ENCODE measurements at regions of chr15 and their contacts with region 1.

Region 1: DNA sequence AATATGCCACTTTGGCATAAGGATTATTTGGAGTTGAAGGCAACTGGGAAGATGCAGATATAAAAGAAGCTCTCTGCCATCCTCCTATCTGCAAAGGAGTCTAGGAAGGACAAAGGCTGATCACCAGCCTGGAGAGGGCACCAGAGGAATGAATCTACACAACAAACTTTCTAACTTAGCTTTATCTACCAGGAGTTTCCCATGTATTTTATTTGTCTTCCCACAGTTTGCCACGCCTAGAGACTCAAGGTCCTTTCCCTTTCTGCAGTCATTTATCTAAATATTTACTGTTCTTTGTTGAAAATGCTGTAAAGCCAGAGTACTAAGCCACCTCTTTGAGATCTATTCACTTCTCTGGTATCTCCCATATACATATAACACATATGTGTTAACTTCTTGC is 32.2 kb downstream of the GPR176 start:
- DNase-seq: peak; percentile 76
- ATAC-seq: peak; percentile 91
- H3K4me3 ChIP-seq: no peak overlapping the region
- H3K27ac ChIP-seq: peak overlapping the region; percentile 45
- H3K4me1 ChIP-seq: peaks cover 22% of the 10 kb centered on the region
- H3K27me3 ChIP-seq: no peaks in the 10 kb centered on the region
- CTCF ChIP-seq: peak; percentile 78

Region 2: GRCh38 chr15:39511916-39512260 is 375.9 kb before region 1 on chr15:
- CTCF ChIA-PET with region 1: no interaction called
- POLR2A ChIA-PET with region 1: no interaction called
- intact Hi-C with region 1: no loop called
- DNase-seq: no peak
- ATAC-seq: peak; percentile 28
- H3K4me3 ChIP-seq: 0 out of 2 replicates have a peak overlapping the region, but pooled peaks have one; percentile 4
- H3K27ac ChIP-seq: no peak overlapping the region
- H3K4me1 ChIP-seq: peaks cover 13% of the 10 kb centered on the region
- H3K27me3 ChIP-seq: no peaks in the 10 kb centered on the region
- CTCF ChIP-seq: no peak

Region 3: GRCh38 chr15:39666677-39667076 is 221.2 kb before region 1 on chr15:
- CTCF ChIA-PET with region 1: no interaction called
- POLR2A ChIA-PET with region 1: no interaction called
- intact Hi-C with region 1: no loop called
- DNase-seq: no peak
- ATAC-seq: no peak
- H3K4me3 ChIP-seq: no peak overlapping the region
- H3K27ac ChIP-seq: no peak overlapping the region
- H3K4me1 ChIP-seq: peaks cover 2% of the 10 kb centered on the region; the same call in 1 of the 2 replicates
- H3K27me3 ChIP-seq: no peaks in the 10 kb centered on the region
- CTCF ChIP-seq: no peak

Region 4: GRCh38 chr15:39908186-39908585 is 20.4 kb after region 1 on chr15:
- CTCF ChIA-PET with region 1: interaction called, 5 read pairs
- POLR2A ChIA-PET with region 1: interaction called, 3 read pairs
- intact Hi-C with region 1: loop called (anchors 1 kb)
- DNase-seq: peak; percentile 82
- ATAC-seq: peak; percentile 98
- H3K4me3 ChIP-seq: no peak overlapping the region
- H3K27ac ChIP-seq: peak overlapping the region; percentile 54
- H3K4me1 ChIP-seq: peaks cover 14% of the 10 kb centered on the region
- H3K27me3 ChIP-seq: no peaks in the 10 kb centered on the region
- CTCF ChIP-seq: no peak

Region 5: GRCh38 chr15:39920510-39921273 is 32.9 kb after region 1 on chr15:
- CTCF ChIA-PET with region 1: interaction called, 7 read pairs
- POLR2A ChIA-PET with region 1: interaction called, 4 read pairs
- intact Hi-C with region 1: loop called (anchors 1 kb)
- DNase-seq: peak; percentile 80
- ATAC-seq: peak; percentile 58
- H3K4me3 ChIP-seq: peak overlapping the region; percentile 89
- H3K27ac ChIP-seq: peak overlapping the region; percentile 64
- H3K4me1 ChIP-seq: peaks cover 25% of the 10 kb centered on the region
- H3K27me3 ChIP-seq: no peaks in the 10 kb centered on the region
- CTCF ChIP-seq: no peak

Region 6: GRCh38 chr15:39976291-39977274 is 88.8 kb after region 1 on chr15:
- CTCF ChIA-PET with region 1: interaction called, 12 read pairs
- POLR2A ChIA-PET with region 1: no interaction called
- intact Hi-C with region 1: loop called (anchors 1 kb)
- DNase-seq: peak; percentile 75
- ATAC-seq: peak; percentile 97
- H3K4me3 ChIP-seq: peak overlapping the region; percentile 67
- H3K27ac ChIP-seq: peak overlapping the region; percentile 2; the same call in 1 of the 2 replicates
- H3K4me1 ChIP-seq: peaks cover 14% of the 10 kb centered on the region; the same call in 1 of the 2 replicates
- H3K27me3 ChIP-seq: no peaks in the 10 kb centered on the region
- CTCF ChIP-seq: peak; percentile 78

Region 7: GRCh38 chr15:40016224-40016865 is 128.5 kb after region 1 on chr15:
- CTCF ChIA-PET with region 1: no interaction called
- POLR2A ChIA-PET with region 1: no interaction called
- intact Hi-C with region 1: no loop called
- DNase-seq: no peak
- ATAC-seq: peak; percentile 58
- H3K4me3 ChIP-seq: no peak overlapping the region
- H3K27ac ChIP-seq: no peak overlapping the region
- H3K4me1 ChIP-seq: no peaks in the 10 kb centered on the region
- H3K27me3 ChIP-seq: no peaks in the 10 kb centered on the region
- CTCF ChIP-seq: no peak

Measured in PC-3 (cell line).